Sciatic nerve (tissue), 2 donors: ENCODE measurements at regions of chr14 and their contacts with region 1.

Region 1: GRCh38 chr14:70514168-70515069 is 20.4 kb downstream of the ADAM20 start:
- DNase-seq: no peak
- ATAC-seq: no peak

Region 2: GRCh38 chr14:70489579-70490175 is 24.7 kb before region 1 on chr14:
- intact Hi-C with region 1: no loop called
- DNase-seq: no peak
- ATAC-seq: no peak

Region 3: DNA sequence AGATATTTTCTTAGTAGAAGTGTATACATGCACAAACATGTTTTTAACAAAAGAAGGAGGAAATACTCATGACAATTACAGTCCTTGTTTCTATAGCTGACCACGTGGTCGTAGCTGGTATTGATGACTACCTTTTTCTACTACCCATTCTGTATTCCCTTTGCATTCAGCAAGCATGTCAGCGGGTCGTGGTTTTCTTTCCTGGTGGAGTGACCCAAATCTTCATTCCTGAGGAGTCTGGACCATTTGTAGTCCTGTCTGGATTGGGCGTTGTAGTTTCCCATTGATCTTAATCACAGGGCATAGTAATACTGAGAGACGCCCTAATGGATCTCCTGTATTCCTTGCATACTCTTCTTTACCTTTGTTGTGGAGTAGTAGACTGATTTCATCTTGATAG is 945.7 kb after region 1 on chr14:
- intact Hi-C with region 1: loop called (anchors 5 kb)
- DNase-seq: no peak
- ATAC-seq: no peak